ENCODE measurements at regions of chr17 and their contacts with region 1.

Region 1: GRCh38 chr17:74987418-74987908 is at the start of gene CDR2L:
- DNase-seq: peak; percentile 70
- H3K4me3 ChIP-seq: peak within 1 kb of the TSS; percentile 82
- H3K27me3 ChIP-seq: no peaks in the 10 kb centered on the region
- CTCF ChIP-seq: no peak
- polyA plus RNA-seq, gene CDR2L: 12.5 and 19.6 TPM in 2 replicates

Region 2: GRCh38 chr17:75019146-75019545 is 31.7 kb after region 1 on chr17:
- CTCF ChIA-PET with region 1: interaction called, 6 read pairs
- POLR2A ChIA-PET with region 1: interaction called, 11 read pairs
- DNase-seq: no peak
- H3K4me3 ChIP-seq: no peak overlapping the region
- H3K27me3 ChIP-seq: no peaks in the 10 kb centered on the region
- CTCF ChIP-seq: no peak

Region 3: GRCh38 chr17:75034236-75034908 is 46.9 kb after region 1 on chr17:
- CTCF ChIA-PET with region 1: no interaction called
- POLR2A ChIA-PET with region 1: interaction called, 10 read pairs
- DNase-seq: no peak
- H3K4me3 ChIP-seq: peak overlapping the region; percentile 56
- H3K27me3 ChIP-seq: no peaks in the 10 kb centered on the region
- CTCF ChIP-seq: peak; percentile 28; the same call in 1 of the 2 replicates

Region 4: GRCh38 chr17:75069783-75070182 is 82.3 kb after region 1 on chr17:
- CTCF ChIA-PET with region 1: no interaction called
- POLR2A ChIA-PET with region 1: no interaction called
- DNase-seq: no peak
- H3K4me3 ChIP-seq: no peak overlapping the region
- H3K27me3 ChIP-seq: no peaks in the 10 kb centered on the region
- CTCF ChIP-seq: peak; percentile 56

Region 5: DNA sequence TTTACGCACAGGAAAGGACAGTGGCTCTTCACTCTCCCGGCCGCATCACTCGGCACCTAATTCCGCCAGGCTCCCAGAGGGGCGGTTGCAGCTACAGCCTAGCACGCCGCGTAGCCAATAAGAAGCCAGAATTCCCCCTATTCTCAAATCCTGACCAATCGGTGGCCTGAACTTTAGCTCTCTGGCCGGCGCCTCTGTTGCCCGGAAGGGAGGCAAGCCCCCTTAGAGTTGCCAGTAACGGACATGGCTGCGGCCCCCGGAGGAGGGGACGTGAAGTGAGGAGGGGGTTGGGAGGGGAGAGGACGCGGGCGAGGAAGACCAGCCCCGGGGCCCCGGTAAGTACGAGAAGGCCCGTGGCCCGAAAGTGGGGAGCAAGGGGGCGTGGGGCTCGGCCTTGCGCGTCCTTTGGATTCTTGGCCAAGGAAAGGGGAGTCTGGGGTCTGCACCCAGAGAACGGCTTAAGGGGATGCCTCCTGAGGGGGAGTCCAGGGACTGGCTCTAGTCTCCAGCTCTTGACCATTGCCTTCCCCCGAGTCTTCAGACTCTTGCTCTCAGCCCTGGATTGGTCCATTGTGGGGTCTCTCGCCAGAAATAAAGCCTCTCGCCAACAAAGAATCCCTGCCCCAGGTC is 469.1 kb after region 1 on chr17 and contains the start of gene TMEM94:
- CTCF ChIA-PET with region 1: no interaction called
- POLR2A ChIA-PET with region 1: no interaction called
- DNase-seq: peak; percentile 81
- H3K4me3 ChIP-seq: peak within 1 kb of the TSS; percentile 93
- H3K27me3 ChIP-seq: no peaks in the 10 kb centered on the region
- CTCF ChIP-seq: no peak
- polyA plus RNA-seq, gene TMEM94: 14.0 and 35.5 TPM in 2 replicates

Measured in BJ (cell line).